ENCODE measurements at regions of chr14 and their contacts with region 1.

Region 1: GRCh38 chr14:21437063-21437901 is 18.6 kb downstream of the CHD8 start:
- DNase-seq: peak; percentile 100
- H3K4me3 ChIP-seq: peak overlapping the region; percentile 81
- H3K27ac ChIP-seq: peak overlapping the region; percentile 36
- H3K4me1 ChIP-seq: peaks cover 21% of the 10 kb centered on the region
- CTCF ChIP-seq: no peak

Region 2: DNA sequence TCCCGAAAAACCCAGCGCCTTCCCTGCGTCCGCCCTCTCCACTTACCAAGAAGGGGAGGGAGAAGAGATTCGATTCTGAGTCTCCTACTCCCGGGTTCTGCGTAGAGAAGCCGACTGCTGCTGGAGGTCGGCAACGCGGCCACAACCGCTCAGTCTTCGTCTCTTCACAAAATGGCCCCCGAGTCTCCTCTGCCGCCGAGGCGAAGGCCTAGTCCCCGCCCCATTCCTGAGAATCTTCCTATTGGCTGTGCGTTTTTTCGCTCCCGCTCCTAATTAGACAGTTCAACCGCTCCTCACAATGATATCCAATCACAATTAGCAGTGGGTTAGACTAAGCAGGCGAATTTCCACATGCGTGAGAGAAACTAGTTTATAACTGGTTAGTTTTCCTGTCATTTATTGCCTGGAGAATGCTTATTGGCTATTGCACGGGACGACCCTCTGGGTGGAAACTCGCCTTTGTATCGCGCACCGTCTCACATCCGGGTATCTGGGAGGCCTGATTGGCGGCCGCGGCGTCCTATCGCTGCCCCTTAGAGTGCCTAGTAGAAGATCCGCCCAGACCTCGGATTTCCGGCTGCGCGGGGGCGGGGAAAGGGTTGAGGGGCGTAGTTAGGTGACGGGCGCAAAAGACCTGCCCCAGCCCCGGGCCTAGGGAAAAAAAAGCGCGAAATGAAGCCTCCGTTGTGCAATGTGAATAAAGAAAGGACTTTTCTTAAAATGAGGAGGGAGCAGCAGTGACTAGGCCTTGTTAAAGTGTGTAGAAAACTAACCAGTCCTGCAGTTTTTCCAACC is 167.8 kb before region 1 on chr14 and contains the start of gene HNRNPC:
- CTCF ChIA-PET with region 1: no interaction called
- POLR2A ChIA-PET with region 1: interaction called, 3 read pairs
- intact Hi-C with region 1: loop called (anchors 5 kb)
- DNase-seq: peak; percentile 100
- H3K4me3 ChIP-seq: peak within 1 kb of the TSS; percentile 95
- H3K27ac ChIP-seq: peak within 1 kb of the TSS; percentile 82
- H3K4me1 ChIP-seq: peaks cover 33% of the 10 kb centered on the region
- CTCF ChIP-seq: no peak
- total RNA-seq, gene HNRNPC: 887 and 1,000 TPM in 2 replicates

Region 3: GRCh38 chr14:21476925-21477681 is 39.8 kb after region 1 on chr14 and contains the starts of genes RAB2B and TOX4:
- CTCF ChIA-PET with region 1: no interaction called
- POLR2A ChIA-PET with region 1: interaction called, 11 read pairs
- intact Hi-C with region 1: no loop called
- DNase-seq: peak; percentile 98
- H3K4me3 ChIP-seq: peak within 1 kb of the TSS; percentile 93
- H3K27ac ChIP-seq: peak within 1 kb of the TSS; percentile 58
- H3K4me1 ChIP-seq: peaks cover 16% of the 10 kb centered on the region
- CTCF ChIP-seq: peak; percentile 89
- total RNA-seq, gene RAB2B: 14.4 and 14.5 TPM in 2 replicates
- total RNA-seq, gene TOX4: 17.6 and 26.1 TPM in 2 replicates

Measured in OCI-LY7 (cell line).